Mammary epithelial cell (primary cell): ENCODE measurements at regions of chr9 and their contacts with region 1.

Region 1: GRCh38 chr9:103261951-103262350 is 266.8 kb downstream of the CYLC2 start:
- DNase-seq: no peak
- H3K4me3 ChIP-seq: no peak overlapping the region
- H3K27ac ChIP-seq: no peak overlapping the region
- H3K4me1 ChIP-seq: no peaks in the 10 kb centered on the region
- H3K27me3 ChIP-seq: no peaks in the 10 kb centered on the region
- CTCF ChIP-seq: no peak

Region 2: DNA sequence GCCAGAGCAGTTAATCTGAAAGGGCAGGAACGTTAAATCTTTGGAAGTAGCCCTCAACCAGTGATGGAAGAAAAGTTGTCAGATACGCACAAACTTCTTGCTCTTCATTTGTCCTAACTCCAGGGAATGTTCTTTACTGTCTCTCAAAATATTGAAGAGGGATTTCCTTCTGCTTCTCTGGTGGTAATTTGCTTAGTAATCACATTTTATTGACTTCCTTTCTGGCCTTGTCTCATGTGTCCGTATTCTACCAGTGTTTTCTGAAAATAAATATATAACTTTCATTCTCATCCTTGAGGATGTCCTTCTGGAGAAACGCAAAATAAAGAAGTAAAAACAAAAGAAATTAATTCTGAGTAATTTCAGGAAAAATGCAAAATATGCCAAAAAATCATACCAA is 15.3 kb after region 1 on chr9:
- CTCF ChIA-PET with region 1: no interaction called
- dilution Hi-C with region 1: no loop called
- in situ Hi-C with region 1: no loop called
- intact Hi-C with region 1: loop called (anchors 1 kb)
- DNase-seq: no peak
- H3K4me3 ChIP-seq: no peak overlapping the region
- H3K27ac ChIP-seq: no peak overlapping the region
- H3K4me1 ChIP-seq: no peaks in the 10 kb centered on the region
- H3K27me3 ChIP-seq: no peaks in the 10 kb centered on the region
- CTCF ChIP-seq: no peak